ENCODE measurements at regions of chr2 and their contacts with region 1.

Region 1: GRCh38 chr2:27954771-27955383 is 64.3 kb downstream of the BABAM2 start:
- DNase-seq: peak; percentile 97
- ATAC-seq: peak; percentile 68
- H3K4me3 ChIP-seq: no peak overlapping the region
- H3K27ac ChIP-seq: peak overlapping the region; percentile 73
- H3K4me1 ChIP-seq: peaks cover 16% of the 10 kb centered on the region
- H3K27me3 ChIP-seq: no peaks in the 10 kb centered on the region
- CTCF ChIP-seq: peak; percentile 46
- POLR2A ChIP-seq: no peak
- RAD21 ChIP-seq: peak; percentile 45

Region 2: DNA sequence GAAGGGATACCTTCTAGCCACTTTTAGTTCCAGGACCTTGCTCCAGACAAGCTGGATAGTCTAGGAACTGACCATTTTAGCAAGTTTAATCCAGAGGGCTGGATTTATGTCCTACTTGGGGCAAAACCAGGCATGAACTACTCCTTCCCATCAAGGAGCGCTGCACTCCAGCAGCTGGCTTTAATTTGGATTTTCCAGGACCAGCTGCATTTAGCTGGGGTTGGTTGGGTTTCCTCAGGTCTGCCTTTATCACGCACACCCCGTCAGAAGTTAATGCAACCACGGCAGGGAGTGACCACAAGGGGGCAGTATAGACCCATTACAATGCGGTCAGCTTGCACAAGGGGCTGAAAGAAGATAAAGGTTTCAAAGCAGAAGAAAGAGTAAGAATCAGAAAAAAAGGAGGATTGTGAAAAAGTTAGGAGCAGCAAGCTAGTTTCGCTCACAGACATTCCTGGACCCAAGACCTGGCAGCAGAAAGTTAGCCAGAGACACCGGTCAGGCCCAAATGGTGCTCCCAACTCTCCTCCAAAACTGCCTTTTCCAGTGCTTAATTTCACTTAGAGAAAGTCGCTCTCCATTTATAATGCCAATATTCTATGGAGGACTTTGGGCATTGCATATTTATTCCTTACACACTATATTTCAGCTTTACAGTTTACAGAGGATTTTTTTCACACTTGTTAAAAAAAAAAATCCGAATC is 251.1 kb before region 1 on chr2:
- CTCF ChIA-PET with region 1: interaction called, 3 read pairs
- POLR2A ChIA-PET with region 1: no interaction called
- dilution Hi-C with region 1: no loop called
- in situ Hi-C with region 1: no loop called
- intact Hi-C with region 1: loop called (anchors 5 kb)
- DNase-seq: peak; percentile 96
- ATAC-seq: peak; percentile 70
- H3K4me3 ChIP-seq: no peak overlapping the region
- H3K27ac ChIP-seq: peak overlapping the region; percentile 35; the same call in 1 of the 2 replicates
- H3K4me1 ChIP-seq: peaks cover 18% of the 10 kb centered on the region
- H3K27me3 ChIP-seq: no peaks in the 10 kb centered on the region
- CTCF ChIP-seq: peak; percentile 96
- POLR2A ChIP-seq: no peak
- RAD21 ChIP-seq: peak; percentile 93

Region 3: DNA sequence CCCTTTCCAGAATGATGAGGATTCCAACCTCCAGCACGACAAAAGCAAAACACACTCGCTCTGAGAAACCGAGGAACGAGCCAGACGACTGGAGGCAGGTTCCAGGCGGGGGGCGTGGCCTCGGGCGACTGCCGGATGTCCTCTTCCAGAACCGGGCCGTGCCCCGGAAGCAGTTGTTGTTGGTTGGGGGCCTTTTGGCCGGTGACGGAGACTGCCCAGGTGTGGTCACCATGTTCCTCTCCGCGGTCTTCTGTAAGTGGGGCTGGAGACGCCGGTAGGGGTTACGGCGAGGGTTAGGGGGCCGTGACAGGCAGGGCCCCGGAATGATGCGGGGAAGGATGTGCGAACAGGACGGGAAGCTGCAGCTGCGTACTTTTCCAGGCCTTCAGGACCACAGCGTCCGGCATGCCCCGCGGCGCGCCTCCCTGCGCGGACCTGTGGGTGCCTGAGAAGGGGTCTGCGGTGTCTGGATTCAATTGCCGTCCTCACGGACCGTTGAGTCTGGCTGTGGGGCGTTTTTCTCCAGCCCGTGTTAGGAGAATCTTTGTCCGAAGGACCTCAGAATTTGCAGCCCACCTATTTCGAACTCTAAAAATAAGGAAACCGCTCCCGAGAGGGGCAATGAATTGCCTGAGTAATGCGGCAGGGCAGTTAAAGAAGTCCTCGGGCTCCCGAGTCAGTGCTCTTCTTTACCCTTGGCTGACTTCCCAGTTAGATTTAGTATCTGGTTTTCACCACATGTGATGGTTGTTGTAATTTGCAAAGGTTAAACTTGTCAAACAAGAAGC is 183.1 kb before region 1 on chr2 and contains the start of gene MRPL33:
- CTCF ChIA-PET with region 1: no interaction called
- POLR2A ChIA-PET with region 1: no interaction called
- dilution Hi-C with region 1: no loop called
- in situ Hi-C with region 1: no loop called
- intact Hi-C with region 1: loop called (anchors 10 kb)
- DNase-seq: peak; percentile 85
- ATAC-seq: peak; percentile 97
- H3K4me3 ChIP-seq: peak within 1 kb of the TSS; percentile 73
- H3K27ac ChIP-seq: peak within 1 kb of the TSS; percentile 88
- H3K4me1 ChIP-seq: peaks cover 12% of the 10 kb centered on the region
- H3K27me3 ChIP-seq: no peaks in the 10 kb centered on the region
- CTCF ChIP-seq: no peak
- POLR2A ChIP-seq: peak; percentile 70
- RAD21 ChIP-seq: no peak
- total RNA-seq, gene MRPL33: 13.3 and 48.6 TPM in 2 replicates

Region 4: GRCh38 chr2:28224648-28225472 is 270.0 kb after region 1 on chr2:
- CTCF ChIA-PET with region 1: no interaction called
- POLR2A ChIA-PET with region 1: no interaction called
- dilution Hi-C with region 1: no loop called
- in situ Hi-C with region 1: no loop called
- intact Hi-C with region 1: loop called (anchors 5 kb)
- DNase-seq: peak; percentile 93
- ATAC-seq: peak; percentile 86
- H3K4me3 ChIP-seq: no peak overlapping the region
- H3K27ac ChIP-seq: peak overlapping the region; percentile 94
- H3K4me1 ChIP-seq: peaks cover 12% of the 10 kb centered on the region
- H3K27me3 ChIP-seq: no peaks in the 10 kb centered on the region
- CTCF ChIP-seq: no peak
- POLR2A ChIP-seq: no peak
- RAD21 ChIP-seq: no peak

Region 5: DNA sequence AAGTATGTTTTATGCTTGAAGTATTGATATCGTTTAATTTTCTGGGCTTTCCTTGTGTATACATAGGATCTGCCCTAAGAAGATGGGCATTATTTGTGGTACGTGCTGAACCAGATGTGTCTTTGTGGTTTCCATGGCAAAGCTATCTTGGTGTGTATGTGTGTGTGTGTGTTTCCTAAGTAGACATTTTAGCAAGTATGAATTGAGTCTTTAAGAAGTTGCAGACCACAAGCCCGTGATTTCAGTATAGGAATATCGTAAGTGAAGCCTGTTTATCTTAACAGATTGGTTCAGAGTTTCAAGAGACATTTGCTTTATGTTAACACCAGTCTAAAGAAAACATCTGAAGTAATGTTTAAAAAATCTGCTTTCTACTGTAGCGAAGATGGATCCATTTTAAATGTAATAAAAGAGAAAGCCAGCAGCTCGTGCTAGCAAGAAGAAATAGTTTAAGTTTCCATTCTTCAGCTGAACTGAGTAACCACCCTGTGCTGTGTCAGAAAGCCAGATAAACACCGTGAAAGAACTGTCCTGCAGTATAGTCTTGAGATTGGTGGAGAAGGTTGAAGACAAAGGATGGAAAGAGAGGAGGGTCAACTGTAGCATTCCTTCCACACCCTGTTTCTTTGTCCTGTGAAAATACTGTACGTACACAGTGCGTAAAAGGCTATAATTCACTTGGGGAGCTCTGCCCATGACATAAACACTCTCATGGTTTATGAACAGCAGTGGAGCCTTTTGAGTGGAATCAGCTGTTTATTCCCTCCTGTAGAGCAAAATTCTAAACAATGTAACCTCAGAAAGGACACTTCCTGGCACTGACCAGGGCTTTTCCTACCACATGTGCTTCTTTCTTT is 345.8 kb after region 1 on chr2:
- CTCF ChIA-PET with region 1: no interaction called
- POLR2A ChIA-PET with region 1: no interaction called
- dilution Hi-C with region 1: no loop called
- in situ Hi-C with region 1: no loop called
- intact Hi-C with region 1: loop called (anchors 2 kb)
- DNase-seq: peak; percentile 98
- ATAC-seq: peak; percentile 83
- H3K4me3 ChIP-seq: peak overlapping the region; percentile 37; the same call in 1 of the 2 replicates
- H3K27ac ChIP-seq: peak overlapping the region; percentile 94
- H3K4me1 ChIP-seq: peaks cover 17% of the 10 kb centered on the region
- H3K27me3 ChIP-seq: no peaks in the 10 kb centered on the region
- CTCF ChIP-seq: no peak
- POLR2A ChIP-seq: no peak
- RAD21 ChIP-seq: peak; percentile 4; the same call in 1 of the 2 replicates

Measured in IMR-90 (cell line).